ENCODE measurements at regions of chr19 and their contacts with region 1.

Region 1: DNA sequence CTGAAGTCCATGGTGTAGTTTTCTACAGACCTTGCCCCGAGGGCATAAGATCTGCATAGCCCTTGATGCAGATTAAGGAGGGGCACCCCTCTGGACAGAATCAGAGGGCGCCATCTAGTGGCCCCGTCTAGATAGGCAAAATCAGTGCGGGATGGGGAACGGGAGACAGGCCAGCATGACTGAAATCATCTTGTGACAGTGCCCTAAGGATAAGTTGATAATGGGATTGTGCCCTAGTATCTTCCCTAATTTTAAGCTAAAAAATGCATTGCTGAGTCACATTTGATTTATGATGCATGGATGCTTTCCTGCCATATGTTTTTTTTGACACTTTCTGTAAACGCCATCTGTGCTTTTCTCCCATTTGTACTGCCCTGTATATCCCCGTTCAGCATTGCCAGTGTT is 19.0 kb upstream of the GPI start:
- DNase-seq: peak; percentile 56 to 63 (median 58)
- H3K4me3 ChIP-seq: no peak overlapping the region
- H3K4me3 Mint-ChIP-seq: no peak overlapping the region
- H3K27ac ChIP-seq: no peak overlapping the region
- H3K27ac Mint-ChIP-seq: peak overlapping the region in 6 of 7 donors; percentile 49 to 92 (median 58)
- H3K4me1 ChIP-seq: peaks cover 18% of the 10 kb centered on the region
- H3K4me1 Mint-ChIP-seq: peaks cover 12 to 30% (median 20%) of the 10 kb centered on the region in 4 donors
- H3K27me3 ChIP-seq: no peaks in the 10 kb centered on the region
- H3K27me3 Mint-ChIP-seq: no peaks in the 10 kb centered on the region

Region 2: GRCh38 chr19:34120846-34121639 is 224.9 kb before region 1 on chr19:
- CTCF ChIA-PET with region 1: no interaction called
- POLR2A ChIA-PET with region 1: no interaction called
- intact Hi-C with region 1: loop called (anchors 1 kb)
- DNase-seq: peak in 4 of 5 donors; percentile 36 to 48 (median 45)
- H3K4me3 ChIP-seq: no peak overlapping the region
- H3K4me3 Mint-ChIP-seq: no peak overlapping the region
- H3K27ac ChIP-seq: no peak overlapping the region
- H3K27ac Mint-ChIP-seq: no peak overlapping the region
- H3K4me1 ChIP-seq: peaks cover 5% of the 10 kb centered on the region
- H3K4me1 Mint-ChIP-seq: peaks cover 0 to 9% (median 4%) of the 10 kb centered on the region in 4 donors
- H3K27me3 ChIP-seq: no peaks in the 10 kb centered on the region
- H3K27me3 Mint-ChIP-seq: peaks cover 0 to 9% of the 10 kb centered on the region in 2 donors

Region 3: GRCh38 chr19:34359140-34359953 is 13.4 kb after region 1 on chr19:
- CTCF ChIA-PET with region 1: interaction called, 15 read pairs
- POLR2A ChIA-PET with region 1: interaction called, 14 read pairs
- intact Hi-C with region 1: loop called (anchors 1 kb)
- DNase-seq: peak; percentile 90 to 94 (median 92)
- H3K4me3 ChIP-seq: peak overlapping the region; percentile 52 to 86
- H3K4me3 Mint-ChIP-seq: peak overlapping the region; percentile 82 to 95 (median 90)
- H3K27ac ChIP-seq: peak overlapping the region; percentile 56
- H3K27ac Mint-ChIP-seq: peak overlapping the region; percentile 89 to 97 (median 95)
- H3K4me1 ChIP-seq: peaks cover 20% of the 10 kb centered on the region
- H3K4me1 Mint-ChIP-seq: peaks cover 15 to 35% (median 26%) of the 10 kb centered on the region in 4 donors
- H3K27me3 ChIP-seq: no peaks in the 10 kb centered on the region
- H3K27me3 Mint-ChIP-seq: no peaks in the 10 kb centered on the region